Thyroid gland (tissue), 4 donors: ENCODE measurements at regions of chr14 and their contacts with region 1.

Region 1: DNA sequence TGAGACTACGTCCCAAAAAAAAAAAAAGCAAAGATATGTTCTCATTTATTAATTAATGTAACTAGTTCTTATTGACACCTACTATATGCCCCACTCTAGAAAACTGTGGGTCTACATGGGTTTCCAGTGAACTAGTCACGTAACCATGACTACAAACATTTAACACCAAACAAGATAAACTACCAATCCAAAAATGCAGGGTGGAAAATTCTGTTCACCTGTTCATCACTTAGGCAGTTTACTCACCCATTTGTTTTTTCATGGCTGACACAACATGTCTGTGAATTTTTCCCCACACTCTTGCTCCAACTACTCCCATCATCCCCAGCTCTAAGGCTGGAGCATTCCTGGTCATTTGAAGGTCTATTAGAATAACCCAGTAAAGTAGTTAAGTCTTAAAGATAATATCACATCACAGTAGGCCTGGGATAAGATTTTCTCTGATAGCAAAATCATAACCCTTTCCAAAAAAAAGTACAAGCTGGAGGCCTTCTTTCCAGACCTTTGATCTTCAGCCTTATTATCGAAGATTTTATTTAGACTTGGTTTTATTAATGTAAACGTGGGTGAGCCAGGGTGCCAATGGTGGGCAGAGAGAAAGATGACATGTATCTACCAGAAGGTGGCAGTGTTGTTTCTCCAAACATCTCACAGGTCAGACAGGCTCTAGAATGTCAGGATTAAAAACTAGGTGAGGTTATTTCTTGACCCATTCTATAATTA is 61.6 kb upstream of the DAAM1 start:
- DNase-seq: peak; percentile 13 to 16
- H3K4me3 ChIP-seq: no peak overlapping the region
- H3K27ac ChIP-seq: no peak overlapping the region
- H3K4me1 ChIP-seq: no peaks in the 10 kb centered on the region
- H3K27me3 ChIP-seq: no peaks in the 10 kb centered on the region
- CTCF ChIP-seq: peak; percentile 37 to 88 (median 76)
- POLR2A ChIP-seq: no peak

Region 2: GRCh38 chr14:59189786-59190771 is 63.2 kb after region 1 on chr14:
- intact Hi-C with region 1: loop called (anchors 10 kb)
- DNase-seq: peak; percentile 91 to 92
- H3K4me3 ChIP-seq: peak overlapping the region in 2 of 3 donors; percentile 76 to 90
- H3K27ac ChIP-seq: peak overlapping the region; percentile 92 to 95 (median 94)
- H3K4me1 ChIP-seq: peaks cover 5 to 7% of the 10 kb centered on the region in 2 donors
- H3K27me3 ChIP-seq: no peaks in the 10 kb centered on the region
- CTCF ChIP-seq: no peak
- POLR2A ChIP-seq: no peak

Region 3: GRCh38 chr14:59301354-59301753 is 174.5 kb after region 1 on chr14:
- intact Hi-C with region 1: no loop called
- DNase-seq: no peak
- H3K4me3 ChIP-seq: no peak overlapping the region
- H3K27ac ChIP-seq: no peak overlapping the region
- H3K4me1 ChIP-seq: peaks cover 21 to 31% of the 10 kb centered on the region in 2 donors
- H3K27me3 ChIP-seq: no peaks in the 10 kb centered on the region
- CTCF ChIP-seq: no peak
- POLR2A ChIP-seq: no peak

Region 4: DNA sequence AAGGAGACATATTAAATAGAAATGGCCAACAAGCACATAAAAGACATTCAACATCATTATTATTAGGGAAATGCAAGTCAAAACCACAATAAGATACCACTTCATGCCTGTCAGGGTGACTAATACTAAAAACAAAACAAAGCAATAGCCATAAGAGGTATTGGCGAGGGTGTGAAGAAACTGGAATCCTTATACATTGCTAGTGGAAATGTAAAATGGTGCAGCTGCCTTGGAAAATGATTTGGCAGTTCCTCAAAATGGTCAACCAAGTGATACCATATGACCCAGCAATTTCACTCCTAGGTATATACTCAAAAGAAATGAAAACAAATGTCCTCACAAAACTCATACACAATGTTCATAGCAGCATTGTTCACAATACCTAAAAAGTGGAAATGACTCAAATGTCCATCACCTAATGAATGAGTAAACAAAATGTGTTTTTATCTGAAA is 311.4 kb after region 1 on chr14:
- intact Hi-C with region 1: loop called (anchors 5 kb)
- DNase-seq: no peak
- H3K4me3 ChIP-seq: no peak overlapping the region
- H3K27ac ChIP-seq: no peak overlapping the region
- H3K4me1 ChIP-seq: no peaks in the 10 kb centered on the region
- H3K27me3 ChIP-seq: no peaks in the 10 kb centered on the region
- CTCF ChIP-seq: no peak
- POLR2A ChIP-seq: no peak